Kidney (tissue), 22 donors: ENCODE measurements at regions of chr22 and their contacts with region 1.

Region 1: GRCh38 chr22:17829695-17830042 is 55.4 kb upstream of the BID start:
- DNase-seq: no peak
- H3K4me3 ChIP-seq: no peak overlapping the region
- H3K27ac ChIP-seq: no peak overlapping the region
- H3K4me1 ChIP-seq: peaks cover 0 to 24% (median 24%) of the 10 kb centered on the region in 3 donors
- H3K27me3 ChIP-seq: no peaks in the 10 kb centered on the region
- CTCF ChIP-seq: no peak

Region 2: GRCh38 chr22:17876306-17876831 is 46.7 kb after region 1 on chr22:
- intact Hi-C with region 1: loop called (anchors 10 kb)
- DNase-seq: peak in 2 of 5 donors; percentile 41 to 46
- H3K4me3 ChIP-seq: no peak overlapping the region
- H3K27ac ChIP-seq: no peak overlapping the region
- H3K4me1 ChIP-seq: no peaks in the 10 kb centered on the region
- H3K27me3 ChIP-seq: no peaks in the 10 kb centered on the region
- CTCF ChIP-seq: no peak

Region 3: GRCh38 chr22:18077639-18078328 is 248.1 kb after region 1 on chr22 and contains the start of gene PEX26:
- intact Hi-C with region 1: loop called (anchors 10 kb)
- DNase-seq: peak; percentile 93 to 98 (median 96)
- H3K4me3 ChIP-seq: peak within 1 kb of the TSS; percentile 88 to 100 (median 95)
- H3K27ac ChIP-seq: peak within 1 kb of the TSS; percentile 64 to 79
- H3K4me1 ChIP-seq: peaks cover 0 to 13% (median 10%) of the 10 kb centered on the region in 3 donors
- H3K27me3 ChIP-seq: no peaks in the 10 kb centered on the region
- CTCF ChIP-seq: no peak
- total RNA-seq, gene PEX26: 45.2 TPM